ENCODE measurements at regions of chr1 and their contacts with region 1.

Region 1: GRCh38 chr1:209565759-209566678 is 17.5 kb upstream of the CAMK1G start:
- DNase-seq: peak; percentile 73 to 83
- ATAC-seq: peak; percentile 87 to 96
- H3K4me3 ChIP-seq: no peak overlapping the region
- H3K27ac ChIP-seq: no peak overlapping the region; a peak in 1 of 6 replicates
- H3K4me1 ChIP-seq: no peaks in the 10 kb centered on the region
- CTCF ChIP-seq: peak; percentile 82
- EP300 ChIP-seq: no peak
- POLR2A ChIP-seq: no peak
- RAD21 ChIP-seq: peak; percentile 81 to 83

Region 2: GRCh38 chr1:209207701-209208286 is 358.2 kb before region 1 on chr1:
- CTCF ChIA-PET with region 1: interaction called, 15 read pairs
- POLR2A ChIA-PET with region 1: no interaction called
- DNase-seq: peak; percentile 38 to 45
- ATAC-seq: peak; percentile 91 to 97
- H3K4me3 ChIP-seq: peak overlapping the region; percentile 22; the same call in 1 of the 3 replicates
- H3K27ac ChIP-seq: peak overlapping the region in 1 of 2 experiments; percentile 63; a peak in 3 of 6 replicates
- H3K4me1 ChIP-seq: no peaks in the 10 kb centered on the region
- CTCF ChIP-seq: peak; percentile 74
- EP300 ChIP-seq: no peak
- POLR2A ChIP-seq: no peak
- RAD21 ChIP-seq: peak; percentile 74 to 84

Region 3: GRCh38 chr1:209585672-209586071 is 19.7 kb after region 1 on chr1:
- CTCF ChIA-PET with region 1: interaction called, 18 read pairs
- POLR2A ChIA-PET with region 1: no interaction called
- DNase-seq: no peak
- ATAC-seq: peak; percentile 52 to 67; a peak in 5 of 6 replicates
- H3K4me3 ChIP-seq: 0 out of 3 replicates have a peak overlapping the region, but pooled peaks have one; percentile 24
- H3K27ac ChIP-seq: no peak overlapping the region
- H3K4me1 ChIP-seq: peaks cover 10% of the 10 kb centered on the region
- CTCF ChIP-seq: no peak
- EP300 ChIP-seq: no peak
- POLR2A ChIP-seq: no peak
- RAD21 ChIP-seq: no peak

Region 4: DNA sequence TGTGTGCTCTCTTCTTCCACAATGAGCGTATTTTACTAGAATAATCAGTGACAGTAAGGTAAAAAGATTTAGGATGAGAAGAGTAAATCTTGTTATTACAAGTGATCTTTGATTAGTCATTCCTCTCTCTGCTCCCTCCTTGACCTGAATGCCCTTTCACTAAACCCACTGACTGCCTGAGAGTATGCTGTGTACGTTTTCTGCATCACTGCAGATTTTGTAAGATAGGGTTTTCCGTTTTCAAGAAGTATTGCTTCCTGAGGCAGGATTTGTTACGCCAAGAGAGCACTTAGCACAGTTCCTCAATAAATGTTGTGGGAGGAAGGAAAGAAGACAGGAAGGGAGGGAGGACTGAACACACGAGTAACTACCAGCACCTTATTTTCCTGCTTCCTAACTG is 93.9 kb after region 1 on chr1:
- CTCF ChIA-PET with region 1: interaction called, 10 read pairs
- POLR2A ChIA-PET with region 1: no interaction called
- DNase-seq: no peak
- ATAC-seq: no peak
- H3K4me3 ChIP-seq: no peak overlapping the region
- H3K27ac ChIP-seq: no peak overlapping the region
- H3K4me1 ChIP-seq: peaks cover 22% of the 10 kb centered on the region
- CTCF ChIP-seq: no peak
- EP300 ChIP-seq: no peak
- POLR2A ChIP-seq: no peak
- RAD21 ChIP-seq: no peak

Region 5: DNA sequence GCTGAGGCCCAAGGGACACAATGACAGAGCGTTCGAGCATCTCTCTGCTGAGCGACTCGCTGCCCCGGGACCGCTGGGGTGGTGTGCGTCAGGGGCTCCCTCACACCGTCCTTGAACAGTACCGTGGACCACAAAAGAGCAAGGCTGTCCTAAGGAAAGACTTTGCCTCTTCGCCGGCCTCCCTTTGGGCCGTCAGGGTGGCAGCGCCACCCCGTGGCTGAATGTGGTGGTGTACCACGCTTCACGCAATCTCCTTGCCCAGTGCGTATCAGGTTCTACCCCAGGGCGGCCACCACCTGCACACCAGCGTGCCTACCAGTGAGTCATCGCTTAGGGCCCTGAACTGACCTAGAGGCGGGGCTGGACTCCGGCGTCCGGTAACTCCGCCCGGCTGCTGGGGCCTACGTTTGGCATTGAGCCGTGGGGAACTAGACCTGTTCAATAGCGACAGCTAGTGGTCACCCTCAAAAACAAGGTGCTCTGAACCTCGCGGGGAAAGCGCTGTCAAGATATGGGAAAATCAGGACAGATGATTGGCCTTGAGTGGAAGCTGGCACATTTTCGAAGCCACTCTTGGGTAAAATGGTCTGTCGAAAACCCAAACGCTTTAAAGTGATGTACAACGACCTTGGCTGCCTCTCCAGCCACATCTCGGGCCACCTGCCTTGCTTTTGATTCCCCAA is 181.7 kb after region 1 on chr1:
- CTCF ChIA-PET with region 1: interaction called, 11 read pairs
- POLR2A ChIA-PET with region 1: no interaction called
- DNase-seq: peak; percentile 95 to 97
- ATAC-seq: peak; percentile 99
- H3K4me3 ChIP-seq: peak overlapping the region; percentile 26; the same call in 1 of the 3 replicates
- H3K27ac ChIP-seq: peak overlapping the region; percentile 41 to 74; a peak in 5 of 6 replicates
- H3K4me1 ChIP-seq: peaks cover 7% of the 10 kb centered on the region; the same call in 1 of the 3 replicates
- CTCF ChIP-seq: peak; percentile 96
- EP300 ChIP-seq: no peak
- POLR2A ChIP-seq: no peak
- RAD21 ChIP-seq: peak; percentile 57 to 83